Endothelial cell of umbilical vein (primary cell): ENCODE measurements at regions of chr2 and their contacts with region 1.

Region 1: DNA sequence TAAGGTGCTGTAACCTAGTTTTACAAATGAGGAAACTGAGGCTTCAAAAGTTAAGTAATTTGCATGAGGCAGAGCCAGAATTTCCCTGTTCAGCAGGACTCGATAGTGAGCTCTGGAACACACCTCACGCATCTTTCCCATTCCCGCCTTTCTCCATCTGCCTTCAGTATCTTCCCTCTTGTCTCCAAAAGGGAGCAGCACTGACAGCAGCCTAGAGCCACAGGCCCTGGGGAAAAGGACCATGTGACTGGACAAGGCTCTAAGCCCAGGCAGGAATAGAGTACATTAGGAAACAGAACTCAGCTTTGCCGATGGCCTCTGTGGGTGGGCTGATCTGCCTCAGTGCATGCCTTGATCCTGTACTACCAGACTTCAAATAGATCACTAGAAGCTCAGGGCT is 21.5 kb downstream of the GPR155 start:
- DNase-seq: no peak
- H3K4me3 ChIP-seq: no peak overlapping the region
- H3K27ac ChIP-seq: no peak overlapping the region
- H3K4me1 ChIP-seq: no peaks in the 10 kb centered on the region
- H3K27me3 ChIP-seq: no peaks in the 10 kb centered on the region
- CTCF ChIP-seq: no peak
- POLR2A ChIP-seq: no peak

Region 2: DNA sequence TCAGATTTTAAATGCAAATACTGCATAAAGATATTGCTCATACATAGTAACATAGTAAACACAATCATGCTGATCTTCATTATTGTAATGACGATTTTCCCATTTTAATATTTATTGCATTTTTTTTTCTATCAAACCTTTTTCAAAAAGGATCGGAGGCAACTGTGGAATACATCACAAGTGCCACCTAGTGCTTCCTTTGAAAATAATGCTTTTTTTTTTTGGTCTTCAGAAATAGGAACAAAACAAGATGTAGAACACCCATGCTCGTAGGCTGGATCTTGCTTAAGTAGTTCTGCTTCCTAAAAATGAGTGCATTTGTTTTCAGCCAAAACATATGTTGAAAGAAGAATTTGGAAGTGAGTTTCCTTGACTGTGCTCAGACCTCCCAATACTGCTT is 57.2 kb after region 1 on chr2:
- CTCF ChIA-PET with region 1: interaction called, 27 read pairs
- POLR2A ChIA-PET with region 1: interaction called, 3 read pairs
- dilution Hi-C with region 1: no loop called
- intact Hi-C with region 1: loop called (anchors 1 kb)
- DNase-seq: peak; percentile 14
- H3K4me3 ChIP-seq: no peak overlapping the region
- H3K27ac ChIP-seq: no peak overlapping the region
- H3K4me1 ChIP-seq: no peaks in the 10 kb centered on the region
- H3K27me3 ChIP-seq: peaks cover 12 to 13% of the 10 kb centered on the region in 2 experiments
- CTCF ChIP-seq: peak in 1 of 2 donors; percentile 3
- POLR2A ChIP-seq: no peak

Region 3: GRCh38 chr2:174577967-174578589 is 112.8 kb after region 1 on chr2:
- CTCF ChIA-PET with region 1: interaction called, 11 read pairs
- POLR2A ChIA-PET with region 1: no interaction called
- dilution Hi-C with region 1: no loop called
- intact Hi-C with region 1: no loop called
- DNase-seq: peak; percentile 55
- H3K4me3 ChIP-seq: no peak overlapping the region
- H3K27ac ChIP-seq: no peak overlapping the region
- H3K4me1 ChIP-seq: no peaks in the 10 kb centered on the region
- H3K27me3 ChIP-seq: no peaks in the 10 kb centered on the region
- CTCF ChIP-seq: peak; percentile 43 to 56
- POLR2A ChIP-seq: no peak

Region 4: DNA sequence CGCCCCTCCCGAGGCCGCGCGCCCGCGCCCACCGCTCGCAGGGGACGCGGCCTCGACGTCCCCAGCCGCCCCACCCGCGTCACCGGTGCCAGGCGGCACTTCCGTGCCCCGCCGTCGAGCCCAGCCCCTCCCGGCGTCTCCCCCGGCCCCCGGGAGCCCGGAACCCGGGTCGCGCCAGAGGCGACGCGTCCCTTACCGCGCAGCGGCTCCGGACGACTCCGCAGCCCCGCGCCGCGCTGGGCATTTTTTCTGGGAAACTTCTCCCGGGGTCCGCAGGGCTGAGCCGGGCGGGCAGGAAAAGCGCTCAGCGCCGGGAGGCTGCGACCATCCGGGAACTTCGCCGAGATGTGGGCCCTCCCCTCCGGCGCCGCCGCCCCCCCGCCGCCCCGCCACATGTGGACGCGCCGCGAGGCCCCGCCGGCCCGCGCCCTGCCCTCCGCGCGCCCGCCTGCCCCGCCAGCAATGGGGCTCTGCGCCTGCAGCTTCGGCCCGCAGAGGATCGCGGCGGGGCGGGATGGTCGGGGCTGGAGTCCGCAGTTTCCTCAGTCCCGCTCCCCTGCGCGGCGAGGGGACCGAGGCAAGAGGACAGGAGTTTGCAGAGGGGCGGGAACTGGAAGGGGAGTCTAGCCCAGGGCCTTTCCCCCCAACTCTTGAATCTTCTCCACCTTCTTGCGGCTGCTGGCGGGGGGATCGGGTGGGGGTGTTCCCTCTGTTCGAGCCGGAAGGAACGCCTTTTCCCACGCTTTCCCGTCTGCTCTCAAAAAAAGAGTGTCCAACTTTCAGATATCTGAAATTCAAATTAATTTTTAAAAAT is 217.5 kb after region 1 on chr2:
- CTCF ChIA-PET with region 1: interaction called, 231 read pairs
- POLR2A ChIA-PET with region 1: no interaction called
- dilution Hi-C with region 1: no loop called
- intact Hi-C with region 1: no loop called
- DNase-seq: peak; percentile 55
- H3K4me3 ChIP-seq: peak overlapping the region; percentile 91 to 94 (median 93)
- H3K27ac ChIP-seq: peak overlapping the region; percentile 32
- H3K4me1 ChIP-seq: peaks cover 16% of the 10 kb centered on the region
- H3K27me3 ChIP-seq: peaks cover 3 to 5% of the 10 kb centered on the region in 2 experiments
- CTCF ChIP-seq: no peak
- POLR2A ChIP-seq: no peak

Region 5: GRCh38 chr2:174888646-174889271 is 423.4 kb after region 1 on chr2:
- CTCF ChIA-PET with region 1: no interaction called
- POLR2A ChIA-PET with region 1: no interaction called
- dilution Hi-C with region 1: no loop called
- intact Hi-C with region 1: no loop called
- DNase-seq: no peak
- H3K4me3 ChIP-seq: no peak overlapping the region
- H3K27ac ChIP-seq: no peak overlapping the region
- H3K4me1 ChIP-seq: no peaks in the 10 kb centered on the region
- H3K27me3 ChIP-seq: no peaks in the 10 kb centered on the region
- CTCF ChIP-seq: no peak
- POLR2A ChIP-seq: no peak